HepG2 (cell line): ENCODE measurements at regions of chr11 and their contacts with region 1.

Region 1: GRCh38 chr11:55942785-55943392 is 6.7 kb upstream of the OR5I1 start:
- DNase-seq: peak; percentile 23
- ATAC-seq: peak; percentile 40; the same call in 1 of the 3 replicates
- H3K4me3 ChIP-seq: no peak overlapping the region
- H3K27ac ChIP-seq: no peak overlapping the region
- H3K4me1 ChIP-seq: no peaks in the 10 kb centered on the region
- H3K27me3 ChIP-seq: no peaks in the 10 kb centered on the region
- CTCF ChIP-seq: peak; percentile 63
- EP300 ChIP-seq: no peak
- POLR2A ChIP-seq: no peak
- RAD21 ChIP-seq: no peak

Region 2: GRCh38 chr11:55819330-55819729 is 123.6 kb before region 1 on chr11 and contains the start of gene OR5D18:
- CTCF ChIA-PET with region 1: no interaction called
- POLR2A ChIA-PET with region 1: no interaction called
- in situ Hi-C with region 1: no loop called
- intact Hi-C with region 1: no loop called
- DNase-seq: no peak
- ATAC-seq: no peak
- H3K4me3 ChIP-seq: no peak within 1 kb of the TSS
- H3K27ac ChIP-seq: no peak within 1 kb of the TSS
- H3K4me1 ChIP-seq: no peaks in the 10 kb centered on the region
- H3K27me3 ChIP-seq: no peaks in the 10 kb centered on the region
- CTCF ChIP-seq: no peak
- EP300 ChIP-seq: no peak
- POLR2A ChIP-seq: no peak
- RAD21 ChIP-seq: no peak
- total RNA-seq, gene OR5D18: not detected in 2 replicates

Region 3: DNA sequence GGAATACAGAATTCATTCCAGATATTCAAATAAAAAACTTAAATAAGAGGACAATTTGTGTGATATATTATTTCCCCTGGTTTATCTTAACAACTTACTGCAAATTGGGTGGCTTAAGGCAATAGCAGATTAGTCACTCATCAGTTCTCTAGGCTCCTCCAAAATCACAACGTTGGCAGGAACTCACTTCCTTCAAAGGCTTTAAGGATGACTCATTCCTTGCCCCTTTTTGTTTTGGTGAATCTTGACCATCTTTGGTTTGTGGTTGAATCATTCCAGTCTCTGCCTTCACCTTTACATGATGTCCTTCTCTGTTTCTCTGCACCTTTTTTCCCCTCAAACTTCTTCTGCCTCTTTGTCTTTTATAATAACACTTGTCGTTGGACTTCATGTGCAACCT is 23.5 kb after region 1 on chr11:
- CTCF ChIA-PET with region 1: no interaction called
- POLR2A ChIA-PET with region 1: no interaction called
- in situ Hi-C with region 1: no loop called
- intact Hi-C with region 1: no loop called
- DNase-seq: no peak
- ATAC-seq: no peak
- H3K4me3 ChIP-seq: no peak overlapping the region
- H3K27ac ChIP-seq: no peak overlapping the region
- H3K4me1 ChIP-seq: no peaks in the 10 kb centered on the region
- H3K27me3 ChIP-seq: no peaks in the 10 kb centered on the region
- CTCF ChIP-seq: no peak
- EP300 ChIP-seq: no peak
- POLR2A ChIP-seq: no peak
- RAD21 ChIP-seq: no peak

Region 4: DNA sequence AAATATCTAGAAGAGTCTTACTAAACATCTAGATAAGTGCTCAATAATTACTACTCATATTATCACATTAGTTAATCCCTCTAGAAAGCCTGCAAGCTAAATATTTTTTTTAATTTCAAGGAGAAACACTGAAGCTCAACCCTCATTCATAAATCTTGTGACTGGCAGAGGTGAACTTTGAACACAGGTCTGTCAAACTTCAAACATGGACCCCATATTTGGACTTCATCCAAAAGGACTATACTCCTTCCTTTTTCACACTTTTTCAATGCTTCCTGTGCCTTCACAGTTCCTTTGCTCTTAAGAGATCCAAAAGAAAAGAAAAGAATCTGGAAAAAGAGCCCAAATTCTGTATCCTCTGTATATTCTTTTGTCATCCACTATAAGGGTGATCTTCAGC is 833.9 kb after region 1 on chr11:
- CTCF ChIA-PET with region 1: no interaction called
- POLR2A ChIA-PET with region 1: no interaction called
- in situ Hi-C with region 1: loop called (anchors 5 kb)
- intact Hi-C with region 1: no loop called
- DNase-seq: no peak
- ATAC-seq: no peak
- H3K4me3 ChIP-seq: no peak overlapping the region
- H3K27ac ChIP-seq: no peak overlapping the region
- H3K4me1 ChIP-seq: no peaks in the 10 kb centered on the region
- H3K27me3 ChIP-seq: no peaks in the 10 kb centered on the region
- CTCF ChIP-seq: no peak
- EP300 ChIP-seq: no peak
- POLR2A ChIP-seq: no peak
- RAD21 ChIP-seq: no peak

Region 5: GRCh38 chr11:56783448-56784041 is 840.7 kb after region 1 on chr11:
- CTCF ChIA-PET with region 1: interaction called, 17 read pairs
- POLR2A ChIA-PET with region 1: no interaction called
- in situ Hi-C with region 1: loop called (anchors 5 kb)
- intact Hi-C with region 1: loop called (anchors 1 kb)
- DNase-seq: peak; percentile 49
- ATAC-seq: peak; percentile 39; the same call in 2 of the 3 replicates
- H3K4me3 ChIP-seq: no peak overlapping the region
- H3K27ac ChIP-seq: no peak overlapping the region
- H3K4me1 ChIP-seq: no peaks in the 10 kb centered on the region
- H3K27me3 ChIP-seq: no peaks in the 10 kb centered on the region
- CTCF ChIP-seq: peak; percentile 65
- EP300 ChIP-seq: no peak
- POLR2A ChIP-seq: no peak
- RAD21 ChIP-seq: no peak